ENCODE measurements at regions of chr18 and their contacts with region 1.

Region 1: GRCh38 chr18:52553441-52553840 is 213.4 kb downstream of the DCC start:
- DNase-seq: no peak
- ATAC-seq: no peak

Region 2: GRCh38 chr18:52353589-52353988 is 199.9 kb before region 1 on chr18:
- intact Hi-C with region 1: no loop called
- DNase-seq: no peak
- ATAC-seq: peak; percentile 27

Region 3: GRCh38 chr18:52422985-52423601 is 130.3 kb before region 1 on chr18:
- intact Hi-C with region 1: no loop called
- DNase-seq: no peak
- ATAC-seq: no peak

Region 4: GRCh38 chr18:52596748-52597435 is 43.5 kb after region 1 on chr18:
- intact Hi-C with region 1: loop called (anchors 2 kb)
- DNase-seq: no peak
- ATAC-seq: no peak

Measured in left ventricle myocardium superior (tissue), 1 donor.